ENCODE measurements at regions of chr10 and their contacts with region 1.

Region 1: GRCh38 chr10:127243490-127244272 is 47.3 kb upstream of the INSYN2A start:
- DNase-seq: peak; percentile 39
- ATAC-seq: peak; percentile 98
- H3K4me3 ChIP-seq: no peak overlapping the region
- H3K27ac ChIP-seq: no peak overlapping the region
- H3K4me1 ChIP-seq: no peaks in the 10 kb centered on the region
- H3K27me3 ChIP-seq: no peaks in the 10 kb centered on the region
- CTCF ChIP-seq: peak; percentile 55 to 96 (median 89); a peak in 5 of 6 replicates
- POLR2A ChIP-seq: no peak
- RAD21 ChIP-seq: peak; percentile 57

Region 2: DNA sequence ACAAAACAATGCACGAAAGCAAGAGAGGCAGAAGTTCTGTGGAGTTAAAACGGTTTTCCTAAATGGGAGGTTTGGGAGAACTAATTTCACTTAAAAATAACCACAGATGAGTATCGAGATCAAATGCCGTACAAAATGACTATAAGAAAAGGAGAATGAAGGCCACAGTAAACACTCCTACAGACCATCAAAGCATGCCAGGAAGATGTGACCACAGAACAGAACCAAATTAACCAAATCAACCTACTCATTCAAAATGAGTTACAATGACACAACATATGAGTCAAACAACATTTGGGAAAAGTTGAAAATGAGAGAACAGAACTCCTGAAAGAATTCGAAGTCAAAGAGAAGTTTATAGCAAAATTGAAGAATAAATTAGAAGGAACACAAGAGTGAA is 362.8 kb before region 1 on chr10:
- CTCF ChIA-PET with region 1: no interaction called
- POLR2A ChIA-PET with region 1: no interaction called
- RAD21 ChIA-PET with region 1: no interaction called
- intact Hi-C with region 1: no loop called
- DNase-seq: no peak
- ATAC-seq: no peak
- H3K4me3 ChIP-seq: no peak overlapping the region
- H3K27ac ChIP-seq: no peak overlapping the region
- H3K4me1 ChIP-seq: no peaks in the 10 kb centered on the region
- H3K27me3 ChIP-seq: peaks cover 17% of the 10 kb centered on the region
- CTCF ChIP-seq: no peak
- POLR2A ChIP-seq: no peak
- RAD21 ChIP-seq: no peak

Region 3: GRCh38 chr10:127102171-127102570 is 141.5 kb before region 1 on chr10:
- CTCF ChIA-PET with region 1: no interaction called
- POLR2A ChIA-PET with region 1: no interaction called
- RAD21 ChIA-PET with region 1: no interaction called
- intact Hi-C with region 1: no loop called
- DNase-seq: no peak
- ATAC-seq: no peak
- H3K4me3 ChIP-seq: no peak overlapping the region
- H3K27ac ChIP-seq: no peak overlapping the region
- H3K4me1 ChIP-seq: no peaks in the 10 kb centered on the region
- H3K27me3 ChIP-seq: no peaks in the 10 kb centered on the region
- CTCF ChIP-seq: no peak
- POLR2A ChIP-seq: no peak
- RAD21 ChIP-seq: no peak

Region 4: GRCh38 chr10:127354992-127355391 is 111.3 kb after region 1 on chr10:
- CTCF ChIA-PET with region 1: no interaction called
- POLR2A ChIA-PET with region 1: no interaction called
- RAD21 ChIA-PET with region 1: no interaction called
- intact Hi-C with region 1: loop called (anchors 5 kb)
- DNase-seq: peak; percentile 3
- ATAC-seq: peak; percentile 59
- H3K4me3 ChIP-seq: no peak overlapping the region
- H3K27ac ChIP-seq: no peak overlapping the region
- H3K4me1 ChIP-seq: no peaks in the 10 kb centered on the region
- H3K27me3 ChIP-seq: no peaks in the 10 kb centered on the region
- CTCF ChIP-seq: peak; percentile 51 to 77 (median 74); a peak in 5 of 6 replicates
- POLR2A ChIP-seq: no peak
- RAD21 ChIP-seq: peak; percentile 60

Region 5: DNA sequence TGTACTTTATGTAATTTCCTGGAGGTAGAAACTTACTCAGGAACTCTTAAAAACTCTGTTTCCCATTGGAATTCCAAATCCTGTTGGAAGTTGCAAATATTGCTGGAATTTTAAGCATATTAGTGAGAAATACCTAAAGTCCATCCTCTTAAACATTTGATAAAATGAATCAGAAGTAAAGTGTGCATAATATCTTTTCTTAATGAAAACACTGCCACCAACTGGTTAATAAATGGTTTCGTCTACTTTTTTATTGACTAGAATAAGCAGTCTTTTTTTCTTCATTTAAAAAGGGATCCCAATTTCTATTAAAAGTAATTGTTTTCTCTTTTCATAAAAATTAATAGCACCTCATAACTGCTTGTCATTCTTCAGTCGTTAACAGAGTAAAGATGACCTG is 333.7 kb after region 1 on chr10:
- CTCF ChIA-PET with region 1: no interaction called
- POLR2A ChIA-PET with region 1: no interaction called
- RAD21 ChIA-PET with region 1: no interaction called
- intact Hi-C with region 1: loop called (anchors 10 kb)
- DNase-seq: no peak
- ATAC-seq: no peak
- H3K4me3 ChIP-seq: no peak overlapping the region
- H3K27ac ChIP-seq: no peak overlapping the region
- H3K4me1 ChIP-seq: no peaks in the 10 kb centered on the region
- H3K27me3 ChIP-seq: peaks cover 61% of the 10 kb centered on the region
- CTCF ChIP-seq: peak in 2 of 3 experiments; percentile 34 to 60; a peak in 3 of 6 replicates
- POLR2A ChIP-seq: no peak
- RAD21 ChIP-seq: peak; percentile 53

Measured in HCT116 (cell line).